Activated T-helper 2 cell treated with anti-CD3 and anti-CD28 coated beads, Interferon-gamma antibody, Interleukin-2, Interleukin-4, amounts not matched to agents 10 μg/mL and 5 μg/mL and 100 μg/mL, durations not matched to agents 14 hours and 24 hours and 36 hours (primary cell): ENCODE measurements at regions of chr1 and their contacts with region 1.

Region 1: GRCh38 chr1:182680901-182681567 is 3.4 kb downstream of the RGS8 start:
- DNase-seq: no peak
- H3K4me3 Mint-ChIP-seq: no peak overlapping the region
- H3K27ac Mint-ChIP-seq: no peak overlapping the region
- H3K4me1 Mint-ChIP-seq: peaks cover 7% of the 10 kb centered on the region
- H3K27me3 Mint-ChIP-seq: peaks cover 17% of the 10 kb centered on the region

Region 2: DNA sequence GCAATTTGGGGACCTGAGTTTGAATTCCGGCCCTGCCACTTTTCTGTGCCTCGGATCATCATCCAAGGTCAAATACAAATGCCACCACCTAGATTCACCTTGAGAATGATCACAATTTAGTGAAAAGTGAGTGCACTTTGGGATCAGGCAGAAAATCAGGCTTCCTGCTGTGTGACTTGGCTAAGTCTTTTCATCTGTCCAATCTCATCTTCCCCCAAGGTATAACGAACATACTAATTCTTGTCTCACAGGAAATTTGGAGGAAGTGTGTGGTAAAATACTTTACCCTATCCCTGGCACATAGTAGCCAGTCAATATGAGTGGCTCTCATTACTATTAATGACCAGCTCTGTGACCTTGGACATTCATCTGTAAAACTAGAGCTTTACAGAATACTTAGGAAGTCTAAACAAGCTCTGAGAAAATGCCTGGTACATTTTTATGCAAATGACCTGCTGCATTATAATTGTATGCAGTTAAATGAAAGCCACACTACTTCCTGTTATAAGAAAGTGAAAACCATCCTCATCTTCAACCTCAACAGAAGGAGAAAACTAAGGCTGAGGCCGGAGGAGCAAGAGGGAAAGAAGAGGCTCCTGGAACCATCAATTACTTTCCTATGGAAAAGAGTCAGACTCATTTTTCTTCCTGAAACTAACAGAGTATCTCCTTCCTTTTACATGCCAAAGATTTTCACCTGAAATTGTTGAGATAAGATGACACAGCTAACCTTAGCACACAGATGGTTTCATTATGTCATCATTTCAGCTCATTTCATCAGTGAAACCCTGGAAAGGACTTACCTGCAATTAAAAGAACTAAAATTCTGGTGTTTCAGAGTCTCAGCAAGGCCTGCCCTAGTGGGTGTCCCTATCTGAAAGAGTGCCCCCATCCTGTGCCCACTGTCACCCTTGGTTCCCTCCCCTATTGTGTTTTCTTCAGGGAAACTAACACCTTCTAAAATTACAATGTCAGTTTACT is 36.0 kb after region 1 on chr1:
- intact Hi-C with region 1: loop called (anchors 5 kb)
- DNase-seq: no peak
- H3K4me3 Mint-ChIP-seq: no peak overlapping the region
- H3K27ac Mint-ChIP-seq: peak overlapping the region; percentile 4
- H3K4me1 Mint-ChIP-seq: peaks cover 52% of the 10 kb centered on the region
- H3K27me3 Mint-ChIP-seq: peaks cover 3% of the 10 kb centered on the region